Dorsolateral prefrontal cortex (tissue), 120 donors: ENCODE measurements at regions of chr4 and their contacts with region 1.

Region 1: GRCh38 chr4:73341454-73341853 is 62.6 kb upstream of the ALB start:
- DNase-seq: peak in 6 of 10 donors; percentile 8 to 60 (median 42)
- H3K4me3 ChIP-seq: no peak overlapping the region
- H3K27ac ChIP-seq: no peak overlapping the region
- H3K27me3 ChIP-seq: no peaks in the 10 kb centered on the region
- CTCF ChIP-seq: peak; percentile 18 to 81 (median 68)

Region 2: GRCh38 chr4:73446336-73446938 is 105.0 kb after region 1 on chr4:
- intact Hi-C with region 1: loop called (anchors 5 to 10 kb)
- DNase-seq: no peak
- H3K4me3 ChIP-seq: no peak overlapping the region
- H3K27ac ChIP-seq: peak overlapping the region in 2 of 59 donors; percentile 11 to 33
- H3K27me3 ChIP-seq: no peaks in the 10 kb centered on the region
- CTCF ChIP-seq: peak; percentile 43 to 86 (median 71)